Dorsolateral prefrontal cortex (tissue), 120 donors: ENCODE measurements at regions of chr1 and their contacts with region 1.

Region 1: GRCh38 chr1:154772606-154773506 is 97.2 kb downstream of the KCNN3 start:
- DNase-seq: no peak
- H3K4me3 ChIP-seq: no peak overlapping the region
- H3K27ac ChIP-seq: peak overlapping the region in 12 of 59 donors; percentile 18 to 68 (median 46)
- H3K27me3 ChIP-seq: no peaks in the 10 kb centered on the region
- CTCF ChIP-seq: no peak

Region 2: GRCh38 chr1:154863315-154864174 is 90.7 kb after region 1 on chr1:
- intact Hi-C with region 1: loop called in 1 of 2 experiments (anchors 10 kb)
- DNase-seq: no peak
- H3K4me3 ChIP-seq: peak overlapping the region in 1 of 59 donors; percentile 10
- H3K27ac ChIP-seq: peak overlapping the region in 2 of 59 donors; percentile 8 to 19
- H3K27me3 ChIP-seq: no peaks in the 10 kb centered on the region
- CTCF ChIP-seq: peak in 32 of 56 donors; percentile 10 to 44 (median 22)